Activated naive CD4-positive, alpha-beta T cell treated with anti-CD3 and anti-CD28 coated beads for 36 hours (primary cell): ENCODE measurements at regions of chr6 and their contacts with region 1.

Region 1: GRCh38 chr6:28355743-28356665 is 6.3 kb downstream of the ZKSCAN3 start:
- DNase-seq: peak; percentile 79
- H3K4me3 Mint-ChIP-seq: peak overlapping the region; percentile 80
- H3K27ac Mint-ChIP-seq: peak overlapping the region; percentile 75
- H3K4me1 Mint-ChIP-seq: peaks cover 23% of the 10 kb centered on the region
- H3K27me3 Mint-ChIP-seq: no peaks in the 10 kb centered on the region

Region 2: DNA sequence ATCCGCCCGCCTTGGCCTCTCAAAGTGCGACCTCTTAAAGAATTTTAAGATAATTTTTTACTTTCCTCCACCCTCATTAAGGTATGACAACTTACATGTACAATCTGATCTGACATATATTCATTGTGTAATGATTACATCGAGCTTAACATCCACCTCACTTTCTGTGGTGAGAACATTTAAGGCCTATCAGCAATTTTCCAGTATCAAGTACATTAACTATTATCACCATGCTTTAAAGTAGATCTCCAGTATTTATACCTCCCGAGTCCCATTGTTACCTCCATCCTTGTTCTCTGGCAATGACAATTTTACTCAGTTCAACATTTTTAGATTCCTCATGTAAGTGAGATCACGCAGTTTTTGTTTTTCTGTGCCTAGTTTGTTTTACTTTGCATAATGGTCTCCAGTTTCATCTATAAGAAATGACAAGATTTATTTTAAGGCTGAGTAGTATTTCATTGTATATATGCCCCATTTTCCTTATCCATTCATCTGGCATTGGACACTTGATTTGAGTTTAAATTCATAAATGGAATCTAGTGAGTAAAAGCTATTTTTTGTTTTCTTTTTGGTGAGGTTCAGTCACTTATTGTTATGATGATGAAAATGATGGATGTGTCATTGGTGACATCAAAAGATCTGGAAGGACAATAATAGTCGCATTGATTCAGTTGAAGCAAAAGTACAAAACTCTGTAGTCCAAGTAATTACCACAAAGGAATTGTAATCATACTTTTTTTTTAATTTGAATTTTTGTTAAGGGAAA is 530.8 kb before region 1 on chr6:
- CTCF ChIA-PET with region 1: no interaction called
- intact Hi-C with region 1: loop called (anchors 2 kb)
- DNase-seq: no peak
- H3K4me3 Mint-ChIP-seq: peak overlapping the region; percentile 89
- H3K27ac Mint-ChIP-seq: peak overlapping the region; percentile 98
- H3K4me1 Mint-ChIP-seq: peaks cover 24% of the 10 kb centered on the region
- H3K27me3 Mint-ChIP-seq: no peaks in the 10 kb centered on the region

Region 3: GRCh38 chr6:28212510-28213212 is 143.3 kb before region 1 on chr6:
- CTCF ChIA-PET with region 1: interaction called, 3 read pairs
- intact Hi-C with region 1: loop called (anchors 2 kb)
- DNase-seq: peak; percentile 86
- H3K4me3 Mint-ChIP-seq: peak overlapping the region; percentile 70
- H3K27ac Mint-ChIP-seq: peak overlapping the region; percentile 38
- H3K4me1 Mint-ChIP-seq: peaks cover 18% of the 10 kb centered on the region
- H3K27me3 Mint-ChIP-seq: peaks cover 72% of the 10 kb centered on the region

Region 4: GRCh38 chr6:28335564-28336283 is 20.3 kb before region 1 on chr6 and contains the start of gene ZSCAN31:
- CTCF ChIA-PET with region 1: interaction called, 10 read pairs
- intact Hi-C with region 1: no loop called
- DNase-seq: peak; percentile 90
- H3K4me3 Mint-ChIP-seq: no peak within 1 kb of the TSS
- H3K27ac Mint-ChIP-seq: no peak within 1 kb of the TSS
- H3K4me1 Mint-ChIP-seq: peaks cover 4% of the 10 kb centered on the region
- H3K27me3 Mint-ChIP-seq: no peaks in the 10 kb centered on the region
- total RNA-seq, gene ZSCAN31: 0.62 to 0.89 TPM